ENCODE measurements at regions of chr1 and their contacts with region 1.

Region 1: GRCh38 chr1:52769346-52770033 is 43.2 kb downstream of the ZYG11B start:
- DNase-seq: no peak
- H3K4me3 ChIP-seq: no peak overlapping the region
- H3K27ac ChIP-seq: no peak overlapping the region
- H3K4me1 ChIP-seq: no peaks in the 10 kb centered on the region
- H3K27me3 ChIP-seq: no peaks in the 10 kb centered on the region
- CTCF ChIP-seq: no peak

Region 2: DNA sequence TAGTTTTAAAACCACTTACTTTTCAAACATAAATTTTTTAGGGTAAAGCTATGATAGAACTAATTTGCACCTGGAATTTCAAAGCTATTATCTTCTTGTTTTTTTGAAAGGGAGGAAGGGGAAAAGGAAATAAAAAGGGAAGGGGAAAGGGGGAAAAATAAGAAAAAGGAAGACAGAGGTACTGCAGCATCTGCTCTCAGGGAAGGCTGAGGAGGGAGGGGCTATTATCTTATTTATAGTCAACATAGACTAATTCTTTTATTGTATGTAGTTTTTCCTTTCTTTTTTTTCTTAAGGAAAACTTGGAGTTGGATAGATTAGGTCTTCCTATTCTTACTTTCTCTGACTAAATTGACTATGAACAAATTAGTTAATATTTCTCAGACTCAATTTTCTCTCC is 31.5 kb after region 1 on chr1:
- CTCF ChIA-PET with region 1: no interaction called
- POLR2A ChIA-PET with region 1: interaction called, 19 read pairs
- intact Hi-C with region 1: no loop called
- DNase-seq: no peak
- H3K4me3 ChIP-seq: no peak overlapping the region
- H3K27ac ChIP-seq: no peak overlapping the region
- H3K4me1 ChIP-seq: no peaks in the 10 kb centered on the region
- H3K27me3 ChIP-seq: no peaks in the 10 kb centered on the region
- CTCF ChIP-seq: no peak